Posterior vena cava (tissue), 2 donors: ENCODE measurements at regions of chr13 and their contacts with region 1.

Region 1: GRCh38 chr13:20489185-20489820 is 36.4 kb downstream of the CRYL1 start:
- DNase-seq: no peak

Region 2: DNA sequence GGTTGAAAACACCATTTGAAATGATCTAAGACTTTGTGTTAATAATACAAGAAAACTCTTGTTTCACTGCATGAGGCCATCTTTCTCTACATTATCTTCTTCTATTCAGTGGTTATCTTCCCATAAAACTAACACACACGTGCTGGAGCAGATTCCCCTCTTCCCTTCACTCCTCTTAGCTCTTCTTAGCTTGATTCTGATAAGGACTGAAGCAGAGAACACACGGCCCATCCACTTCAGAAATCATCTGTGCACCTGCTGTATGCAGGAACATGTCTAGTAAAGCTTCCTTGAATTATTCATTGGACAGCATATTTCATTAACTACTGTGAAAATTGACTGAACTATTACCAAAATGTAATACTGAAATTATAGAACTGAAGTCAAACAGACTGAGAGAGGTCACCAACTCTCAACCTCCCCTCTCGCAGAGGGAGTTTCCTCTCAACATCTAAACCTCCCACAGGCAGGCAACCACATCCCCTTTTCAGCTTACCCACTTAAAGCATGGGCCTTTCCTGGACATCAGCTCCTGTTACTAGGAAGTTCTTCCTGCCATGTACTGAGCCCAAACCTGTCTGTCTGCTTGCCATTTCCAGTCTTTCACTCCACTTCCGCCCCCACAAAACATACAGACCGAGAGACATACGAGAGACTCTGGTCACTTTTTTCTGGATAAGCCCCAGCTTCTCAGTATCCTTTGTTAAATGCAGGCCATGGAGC is 77.5 kb before region 1 on chr13:
- intact Hi-C with region 1: no loop called
- DNase-seq: no peak

Region 3: GRCh38 chr13:20588529-20589110 is 99.3 kb after region 1 on chr13:
- intact Hi-C with region 1: no loop called
- DNase-seq: no peak

Region 4: DNA sequence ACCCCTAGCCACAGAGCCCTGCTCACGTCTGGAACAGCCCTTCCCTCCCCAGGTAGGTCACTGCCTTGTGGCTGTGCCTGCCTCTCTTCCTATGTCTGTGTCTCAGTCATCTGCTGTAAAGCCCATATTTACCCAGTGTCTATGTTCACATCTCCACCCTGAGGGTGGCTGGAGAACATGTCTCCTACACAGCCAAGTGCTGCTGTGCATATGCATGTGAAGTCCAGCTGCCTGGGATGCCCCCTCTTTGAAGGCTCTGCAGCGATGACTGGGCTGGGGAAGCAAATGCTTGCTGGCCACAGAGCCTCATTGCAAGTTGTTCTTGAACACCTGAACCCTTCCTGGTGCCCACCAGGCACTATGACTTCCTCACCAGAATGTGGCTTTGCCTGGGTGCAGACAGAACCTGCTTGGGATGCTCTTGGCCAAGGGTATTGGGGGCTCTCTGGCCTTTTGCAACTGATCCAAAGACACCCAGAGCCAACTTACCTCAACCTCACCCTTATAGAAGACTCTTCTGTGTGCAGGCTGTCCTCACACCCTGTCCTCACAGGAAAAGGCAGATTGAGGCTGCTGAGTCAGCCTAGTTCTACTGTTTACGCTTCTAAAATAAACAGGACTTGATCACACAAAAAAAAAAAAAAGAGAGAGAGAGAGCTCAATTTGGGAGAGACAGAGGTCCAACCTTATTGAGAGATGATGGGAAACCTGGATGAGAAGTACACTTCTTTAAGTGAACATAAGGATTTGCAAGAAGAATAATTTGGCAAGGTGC is 713.6 kb after region 1 on chr13:
- intact Hi-C with region 1: loop called in 1 of 2 experiments (anchors 5 kb)
- DNase-seq: no peak